Activated naive CD4-positive, alpha-beta T cell treated with anti-CD3 and anti-CD28 coated beads for 36 hours (primary cell): ENCODE measurements at regions of chr11 and their contacts with region 1.

Region 1: GRCh38 chr11:1572197-1573076 is at the start of gene DUSP8:
- DNase-seq: peak; percentile 92
- H3K4me3 Mint-ChIP-seq: peak within 1 kb of the TSS; percentile 64
- H3K27ac Mint-ChIP-seq: no peak within 1 kb of the TSS
- H3K4me1 Mint-ChIP-seq: peaks cover 19% of the 10 kb centered on the region
- H3K27me3 Mint-ChIP-seq: peaks cover 15% of the 10 kb centered on the region
- total RNA-seq, gene DUSP8: 2.9 to 3.0 TPM

Region 2: GRCh38 chr11:1202776-1203504 is 369.5 kb before region 1 on chr11:
- CTCF ChIA-PET with region 1: interaction called, 8 read pairs
- intact Hi-C with region 1: loop called (anchors 1 kb)
- DNase-seq: peak; percentile 68
- H3K4me3 Mint-ChIP-seq: no peak overlapping the region
- H3K27ac Mint-ChIP-seq: no peak overlapping the region
- H3K4me1 Mint-ChIP-seq: no peaks in the 10 kb centered on the region
- H3K27me3 Mint-ChIP-seq: no peaks in the 10 kb centered on the region

Region 3: GRCh38 chr11:1453611-1454034 is 118.8 kb before region 1 on chr11:
- CTCF ChIA-PET with region 1: interaction called, 4 read pairs
- intact Hi-C with region 1: loop called (anchors 1 kb)
- DNase-seq: peak; percentile 82
- H3K4me3 Mint-ChIP-seq: no peak overlapping the region
- H3K27ac Mint-ChIP-seq: no peak overlapping the region
- H3K4me1 Mint-ChIP-seq: no peaks in the 10 kb centered on the region
- H3K27me3 Mint-ChIP-seq: no peaks in the 10 kb centered on the region

Region 4: DNA sequence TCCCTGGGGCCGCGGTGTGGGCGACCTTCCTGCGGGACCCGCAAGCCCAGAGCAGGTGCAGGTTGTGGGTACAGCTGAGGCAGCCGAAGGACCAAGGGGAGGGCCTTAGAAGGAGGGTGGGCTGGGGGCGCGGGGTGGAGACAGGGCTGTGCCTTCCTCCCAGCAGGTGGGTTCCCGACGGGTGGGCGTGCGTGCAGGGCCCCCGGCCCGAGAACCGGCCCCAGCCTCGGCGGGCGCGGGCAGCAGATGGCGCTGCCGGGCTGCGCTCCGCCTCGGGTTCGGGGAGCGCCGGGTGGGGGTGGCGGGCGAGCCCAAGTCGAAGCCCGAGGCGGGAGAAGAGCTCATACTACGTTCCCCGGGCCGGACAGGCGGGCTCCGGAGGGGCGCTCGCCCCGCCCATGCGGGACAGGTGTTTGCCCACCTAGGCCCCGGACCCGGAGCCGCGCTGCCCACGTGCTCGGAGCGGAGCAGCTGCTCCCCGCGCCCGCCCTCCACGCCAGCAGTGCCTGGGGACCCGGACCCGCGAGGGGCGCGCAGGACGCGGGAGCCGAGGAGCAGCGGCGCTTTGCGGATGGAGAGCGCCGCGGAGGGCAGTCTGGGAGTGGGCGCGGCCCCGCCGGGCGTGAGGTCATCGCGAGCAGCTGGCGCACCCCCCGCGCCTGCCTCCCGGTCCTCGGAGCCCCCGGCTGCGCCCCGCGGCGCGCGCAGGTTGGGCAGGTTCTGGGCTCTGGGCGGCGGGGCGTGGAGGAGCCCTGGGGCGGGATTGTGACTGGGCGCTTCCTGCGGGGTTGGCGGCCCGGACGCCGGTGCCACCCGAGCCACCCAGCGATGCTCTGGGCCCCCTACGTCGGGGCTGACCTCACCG is 25.7 kb before region 1 on chr11:
- CTCF ChIA-PET with region 1: interaction called, 56 read pairs
- intact Hi-C with region 1: loop called (anchors 1 kb)
- DNase-seq: peak; percentile 36
- H3K4me3 Mint-ChIP-seq: no peak overlapping the region
- H3K27ac Mint-ChIP-seq: no peak overlapping the region
- H3K4me1 Mint-ChIP-seq: peaks cover 4% of the 10 kb centered on the region
- H3K27me3 Mint-ChIP-seq: peaks cover 27% of the 10 kb centered on the region

Region 5: GRCh38 chr11:1559119-1559951 is 13.1 kb before region 1 on chr11:
- CTCF ChIA-PET with region 1: interaction called, 12 read pairs
- intact Hi-C with region 1: no loop called
- DNase-seq: no peak
- H3K4me3 Mint-ChIP-seq: no peak overlapping the region
- H3K27ac Mint-ChIP-seq: no peak overlapping the region
- H3K4me1 Mint-ChIP-seq: no peaks in the 10 kb centered on the region
- H3K27me3 Mint-ChIP-seq: no peaks in the 10 kb centered on the region

Region 6: DNA sequence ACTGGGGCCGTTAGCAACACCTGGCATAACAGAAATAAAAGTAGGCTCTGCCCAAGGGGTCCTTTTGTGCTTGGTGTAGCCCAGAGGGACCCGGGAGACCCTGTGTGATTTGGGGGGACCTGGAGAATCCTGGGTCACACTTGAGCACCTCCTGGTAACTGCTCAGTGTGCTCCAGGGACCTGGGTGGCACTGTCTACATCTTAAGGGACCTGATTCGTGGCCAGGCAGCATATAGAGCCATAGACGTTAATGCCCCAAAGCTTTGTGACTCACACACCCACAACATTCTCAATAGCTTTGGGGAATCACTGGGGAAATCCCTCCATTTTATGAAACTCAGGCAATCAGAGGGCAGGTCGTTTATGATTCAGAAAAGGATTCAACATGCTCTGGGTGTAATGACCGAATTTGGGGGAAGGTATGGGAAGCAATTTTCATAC is 570.3 kb after region 1 on chr11:
- CTCF ChIA-PET with region 1: no interaction called
- intact Hi-C with region 1: loop called (anchors 5 kb)
- DNase-seq: peak; percentile 75
- H3K4me3 Mint-ChIP-seq: peak overlapping the region; percentile 49
- H3K27ac Mint-ChIP-seq: peak overlapping the region; percentile 63
- H3K4me1 Mint-ChIP-seq: peaks cover 34% of the 10 kb centered on the region
- H3K27me3 Mint-ChIP-seq: peaks cover 56% of the 10 kb centered on the region